GM12878 (cell line): ENCODE measurements at regions of chr2 and their contacts with region 1.

Region 1: GRCh38 chr2:69770193-69771146 is 28.5 kb downstream of the ANXA4 start:
- DNase-seq: no peak
- ATAC-seq: peak; percentile 62
- H3K4me3 ChIP-seq: no peak overlapping the region
- H3K27ac ChIP-seq: no peak overlapping the region
- H3K4me1 ChIP-seq: peaks cover 60% of the 10 kb centered on the region
- H3K27me3 ChIP-seq: no peaks in the 10 kb centered on the region
- CTCF ChIP-seq: no peak
- EP300 ChIP-seq: no peak
- POLR2A ChIP-seq: no peak
- RAD21 ChIP-seq: no peak

Region 2: DNA sequence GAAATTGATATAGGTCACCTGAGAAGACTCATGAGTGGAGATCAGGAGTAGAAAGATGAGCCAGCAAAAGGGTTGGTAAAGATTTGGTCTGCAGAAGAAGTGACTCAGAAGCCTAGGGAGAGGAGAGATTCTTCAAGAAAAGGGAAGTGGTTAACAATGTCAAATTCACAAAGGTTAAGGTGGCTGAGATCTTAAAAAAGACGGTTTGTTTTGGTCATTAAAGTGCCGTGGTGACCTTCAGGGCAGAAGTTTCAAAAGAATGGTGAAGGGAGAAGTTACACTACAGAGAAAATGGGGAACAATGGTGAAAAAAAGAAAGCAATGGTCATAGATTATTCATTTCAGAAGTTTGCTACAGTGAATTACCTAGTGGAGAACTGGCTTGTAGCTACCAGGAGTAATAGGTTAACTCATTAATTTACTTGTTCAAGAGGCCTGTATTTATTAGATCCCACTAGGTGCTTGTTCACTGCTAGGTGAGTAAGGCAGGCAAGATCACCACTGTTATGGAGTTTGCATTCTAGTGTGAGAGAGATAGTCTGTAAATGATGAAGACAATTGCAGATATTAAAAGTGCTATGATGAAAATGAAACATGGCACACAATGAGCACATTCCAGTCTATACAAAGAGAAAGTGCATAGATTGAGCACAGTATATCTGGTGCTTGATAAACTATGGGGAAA is 1346.4 kb before region 1 on chr2:
- CTCF ChIA-PET with region 1: no interaction called
- POLR2A ChIA-PET with region 1: no interaction called
- RAD21 ChIA-PET with region 1: no interaction called
- SMC1A ChIA-PET with region 1: no interaction called
- in situ Hi-C with region 1: no loop called
- intact Hi-C with region 1: no loop called
- DNase-seq: peak; percentile 98
- ATAC-seq: peak; percentile 85
- H3K4me3 ChIP-seq: peak overlapping the region; percentile 18; the same call in 1 of the 2 replicates
- H3K27ac ChIP-seq: peak overlapping the region; percentile 88
- H3K4me1 ChIP-seq: peaks cover 64% of the 10 kb centered on the region
- H3K27me3 ChIP-seq: no peaks in the 10 kb centered on the region
- CTCF ChIP-seq: no peak
- EP300 ChIP-seq: peak; percentile 91 to 92
- POLR2A ChIP-seq: no peak
- RAD21 ChIP-seq: peak; percentile 18; the same call in 1 of the 2 replicates

Region 3: DNA sequence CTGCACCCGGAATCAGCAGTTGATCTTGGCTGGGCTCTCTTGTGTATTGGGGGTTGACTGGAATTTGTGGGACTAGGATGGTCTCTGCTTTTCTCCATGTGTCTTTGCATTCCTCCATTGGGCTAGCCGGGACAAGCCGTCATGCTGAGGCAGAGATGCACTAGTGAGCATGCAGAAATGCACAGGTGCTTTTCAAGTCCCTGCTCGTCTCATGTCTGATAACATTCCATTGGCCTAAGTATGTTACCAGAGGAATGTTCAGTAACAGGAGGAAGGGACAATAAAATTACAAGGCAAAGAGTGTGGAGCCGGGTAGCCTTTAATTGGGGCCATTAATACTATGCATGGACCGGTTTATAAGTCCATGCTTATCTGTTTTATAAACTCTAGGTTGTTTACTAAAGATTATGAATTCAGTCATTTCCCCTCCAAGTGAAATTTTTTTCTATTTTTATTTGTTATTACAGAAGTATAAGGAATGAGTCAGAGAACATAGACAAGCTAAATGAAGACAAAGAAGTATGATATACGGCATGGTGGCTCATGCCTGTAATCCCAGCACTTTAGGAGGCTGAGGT is 102.6 kb before region 1 on chr2:
- CTCF ChIA-PET with region 1: no interaction called
- POLR2A ChIA-PET with region 1: no interaction called
- RAD21 ChIA-PET with region 1: no interaction called
- SMC1A ChIA-PET with region 1: no interaction called
- in situ Hi-C with region 1: no loop called
- intact Hi-C with region 1: no loop called
- DNase-seq: no peak
- ATAC-seq: no peak
- H3K4me3 ChIP-seq: no peak overlapping the region
- H3K27ac ChIP-seq: no peak overlapping the region
- H3K4me1 ChIP-seq: no peaks in the 10 kb centered on the region
- H3K27me3 ChIP-seq: no peaks in the 10 kb centered on the region
- CTCF ChIP-seq: no peak
- EP300 ChIP-seq: no peak
- POLR2A ChIP-seq: no peak
- RAD21 ChIP-seq: no peak

Region 4: DNA sequence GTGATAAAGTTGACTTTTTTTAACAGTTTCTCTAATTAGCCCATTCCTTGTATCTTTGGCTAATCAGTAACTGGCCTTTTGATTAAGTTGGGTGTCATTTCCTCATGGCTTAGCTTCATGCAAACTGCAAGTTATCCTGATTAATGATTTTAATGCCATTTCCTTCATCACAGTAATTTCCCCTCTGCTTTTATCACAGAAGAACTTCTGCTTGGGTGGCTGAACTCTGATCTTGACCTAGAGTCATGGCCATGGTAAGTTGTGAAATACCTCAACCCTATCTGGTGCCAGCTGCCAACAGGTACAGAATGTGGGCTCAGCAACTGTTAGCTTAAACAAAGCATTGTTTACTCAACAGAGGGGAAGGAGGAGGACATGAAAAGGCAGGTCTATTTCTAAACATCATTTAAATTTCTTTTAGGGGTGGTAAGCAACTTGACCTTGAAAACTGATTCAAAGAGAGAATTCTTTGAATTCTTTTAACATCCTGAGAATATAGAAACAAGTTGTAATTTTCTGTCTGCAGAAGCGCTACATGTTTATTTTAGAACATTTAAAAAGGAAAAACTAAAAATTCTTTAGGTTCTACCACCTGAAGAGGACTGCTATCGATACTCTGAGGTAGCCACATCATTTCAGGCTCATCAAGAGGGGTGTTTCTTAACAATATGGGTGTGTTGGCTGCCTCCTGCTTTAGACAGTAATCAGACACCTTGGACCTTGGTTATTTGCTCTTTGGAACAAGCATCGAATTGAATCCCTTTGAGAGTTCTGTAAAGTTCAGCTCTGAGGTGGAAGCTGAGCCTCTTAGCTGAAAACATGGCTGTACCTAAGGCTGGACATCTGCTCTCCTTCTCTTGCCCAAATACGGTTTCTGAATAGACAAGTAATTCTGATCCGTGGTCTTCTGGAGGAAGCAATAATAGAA is 11.1 kb after region 1 on chr2:
- CTCF ChIA-PET with region 1: interaction called, 6 read pairs
- POLR2A ChIA-PET with region 1: interaction called, 7 read pairs
- RAD21 ChIA-PET with region 1: interaction called, 6 read pairs
- SMC1A ChIA-PET with region 1: interaction called, 94 read pairs
- in situ Hi-C with region 1: no loop called
- intact Hi-C with region 1: no loop called
- DNase-seq: no peak
- ATAC-seq: peak; percentile 88
- H3K4me3 ChIP-seq: 0 out of 2 replicates have a peak overlapping the region, but pooled peaks have one; percentile 21
- H3K27ac ChIP-seq: peak overlapping the region; percentile 42
- H3K4me1 ChIP-seq: peaks cover 14% of the 10 kb centered on the region
- H3K27me3 ChIP-seq: no peaks in the 10 kb centered on the region
- CTCF ChIP-seq: no peak
- EP300 ChIP-seq: no peak
- POLR2A ChIP-seq: no peak
- RAD21 ChIP-seq: no peak